CD8-positive, alpha-beta T cell (primary cell): ENCODE measurements at regions of chr1 and their contacts with region 1.

Region 1: DNA sequence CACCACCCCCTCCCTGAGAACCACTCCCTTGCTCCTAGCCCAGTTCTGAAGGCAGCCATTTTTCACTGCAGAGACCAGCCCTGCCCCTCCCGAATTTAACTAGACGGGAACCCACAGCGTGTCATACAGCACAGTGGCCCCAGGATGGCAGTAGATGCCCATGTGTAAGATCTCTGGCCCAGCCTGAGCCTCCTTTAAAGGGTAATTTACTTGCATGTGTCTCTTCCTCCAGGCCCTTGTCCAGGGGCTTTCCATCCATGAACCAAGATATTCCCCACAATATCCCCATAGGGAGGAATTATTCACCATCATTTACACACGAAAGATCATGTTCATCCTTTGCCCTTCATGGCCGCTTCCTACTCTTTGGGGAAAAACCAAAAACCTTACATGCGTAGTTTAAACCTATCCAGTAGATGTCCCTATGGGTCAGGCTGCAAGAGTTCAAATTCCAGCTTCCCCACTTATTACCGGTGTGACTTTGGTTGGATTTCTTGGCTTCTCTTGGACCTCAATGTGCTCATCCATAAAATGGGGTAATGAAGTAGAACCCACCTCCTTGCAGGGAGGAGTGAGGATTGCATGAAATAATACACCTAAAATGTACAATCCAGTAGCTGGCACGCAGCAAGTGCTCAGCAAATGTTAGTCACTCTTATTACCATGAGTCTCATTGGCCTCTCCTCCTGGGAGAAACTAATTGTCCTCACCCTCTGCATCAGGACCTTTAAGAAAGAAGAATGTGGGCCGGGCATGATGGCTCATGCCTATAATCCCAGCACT is 4.0 kb upstream of the LACTBL1 start:
- DNase-seq: peak; percentile 15 to 65 (median 44)
- ATAC-seq: peak; percentile 93
- H3K4me3 ChIP-seq: no peak overlapping the region
- H3K4me3 Mint-ChIP-seq: no peak overlapping the region
- H3K27ac ChIP-seq: no peak overlapping the region
- H3K27ac Mint-ChIP-seq: no peak overlapping the region
- H3K4me1 ChIP-seq: no peaks in the 10 kb centered on the region
- H3K4me1 Mint-ChIP-seq: no peaks in the 10 kb centered on the region
- H3K27me3 ChIP-seq: no peaks in the 10 kb centered on the region
- H3K27me3 Mint-ChIP-seq: peaks cover 40% of the 10 kb centered on the region
- CTCF ChIP-seq: peak; percentile 49

Region 2: GRCh38 chr1:22490309-22490708 is 486.3 kb before region 1 on chr1:
- CTCF ChIA-PET with region 1: no interaction called
- POLR2A ChIA-PET with region 1: no interaction called
- intact Hi-C with region 1: loop called in 1 of 2 experiments (anchors 10 kb)
- DNase-seq: no peak
- ATAC-seq: no peak
- H3K4me3 ChIP-seq: no peak overlapping the region
- H3K4me3 Mint-ChIP-seq: no peak overlapping the region
- H3K27ac ChIP-seq: no peak overlapping the region
- H3K27ac Mint-ChIP-seq: no peak overlapping the region
- H3K4me1 ChIP-seq: no peaks in the 10 kb centered on the region
- H3K4me1 Mint-ChIP-seq: peaks cover 17% of the 10 kb centered on the region
- H3K27me3 ChIP-seq: no peaks in the 10 kb centered on the region
- H3K27me3 Mint-ChIP-seq: no peaks in the 10 kb centered on the region
- CTCF ChIP-seq: no peak

Region 3: GRCh38 chr1:23273450-23274133 is 296.9 kb after region 1 on chr1:
- CTCF ChIA-PET with region 1: no interaction called
- POLR2A ChIA-PET with region 1: no interaction called
- intact Hi-C with region 1: loop called in 1 of 2 experiments (anchors 10 kb)
- DNase-seq: no peak
- ATAC-seq: no peak
- H3K4me3 ChIP-seq: no peak overlapping the region
- H3K4me3 Mint-ChIP-seq: no peak overlapping the region
- H3K27ac ChIP-seq: no peak overlapping the region
- H3K27ac Mint-ChIP-seq: no peak overlapping the region
- H3K4me1 ChIP-seq: no peaks in the 10 kb centered on the region
- H3K4me1 Mint-ChIP-seq: no peaks in the 10 kb centered on the region
- H3K27me3 ChIP-seq: peaks cover 4 to 11% of the 10 kb centered on the region in 2 experiments
- H3K27me3 Mint-ChIP-seq: peaks cover 32% of the 10 kb centered on the region
- CTCF ChIP-seq: no peak

Region 4: GRCh38 chr1:23403735-23404486 is 427.3 kb after region 1 on chr1:
- CTCF ChIA-PET with region 1: interaction called, 3 read pairs
- POLR2A ChIA-PET with region 1: no interaction called
- intact Hi-C with region 1: loop called (anchors 2 to 5 kb)
- DNase-seq: peak; percentile 69 to 88 (median 78)
- ATAC-seq: peak; percentile 100
- H3K4me3 ChIP-seq: no peak overlapping the region
- H3K4me3 Mint-ChIP-seq: no peak overlapping the region
- H3K27ac ChIP-seq: no peak overlapping the region
- H3K27ac Mint-ChIP-seq: no peak overlapping the region
- H3K4me1 ChIP-seq: peaks cover 4% of the 10 kb centered on the region
- H3K4me1 Mint-ChIP-seq: peaks cover 9% of the 10 kb centered on the region
- H3K27me3 ChIP-seq: no peaks in the 10 kb centered on the region
- H3K27me3 Mint-ChIP-seq: no peaks in the 10 kb centered on the region
- CTCF ChIP-seq: peak; percentile 87